A549 (cell line): ENCODE measurements at regions of chr2 and their contacts with region 1.

Region 1: GRCh38 chr2:70861777-70862625 is 26.4 kb upstream of the CD207 start:
- DNase-seq: peak; percentile 85 to 92
- ATAC-seq: peak; percentile 90 to 97
- H3K4me3 ChIP-seq: no peak overlapping the region
- H3K27ac ChIP-seq: no peak overlapping the region
- H3K4me1 ChIP-seq: peaks cover 3% of the 10 kb centered on the region; the same call in 1 of the 3 replicates
- CTCF ChIP-seq: peak; percentile 98
- EP300 ChIP-seq: no peak
- POLR2A ChIP-seq: no peak
- RAD21 ChIP-seq: peak; percentile 91 to 95

Region 2: GRCh38 chr2:70828914-70829824 is 32.8 kb before region 1 on chr2:
- CTCF ChIA-PET with region 1: interaction called, 33 read pairs
- POLR2A ChIA-PET with region 1: no interaction called
- DNase-seq: no peak
- ATAC-seq: no peak
- H3K4me3 ChIP-seq: no peak overlapping the region
- H3K27ac ChIP-seq: no peak overlapping the region
- H3K4me1 ChIP-seq: no peaks in the 10 kb centered on the region
- CTCF ChIP-seq: no peak
- EP300 ChIP-seq: no peak
- POLR2A ChIP-seq: no peak
- RAD21 ChIP-seq: no peak

Region 3: GRCh38 chr2:70851704-70852103 is 10.3 kb before region 1 on chr2:
- CTCF ChIA-PET with region 1: interaction called, 79 read pairs
- POLR2A ChIA-PET with region 1: no interaction called
- DNase-seq: no peak
- ATAC-seq: no peak
- H3K4me3 ChIP-seq: no peak overlapping the region
- H3K27ac ChIP-seq: no peak overlapping the region
- H3K4me1 ChIP-seq: no peaks in the 10 kb centered on the region
- CTCF ChIP-seq: no peak
- EP300 ChIP-seq: no peak
- POLR2A ChIP-seq: no peak
- RAD21 ChIP-seq: no peak

Region 4: GRCh38 chr2:70935468-70936164 is 73.6 kb after region 1 on chr2 and contains the start of gene ATP6V1B1:
- CTCF ChIA-PET with region 1: interaction called, 174 read pairs
- POLR2A ChIA-PET with region 1: no interaction called
- DNase-seq: no peak
- ATAC-seq: peak in 1 of 2 experiments; percentile 17; a peak in 2 of 6 replicates
- H3K4me3 ChIP-seq: no peak within 1 kb of the TSS
- H3K27ac ChIP-seq: no peak within 1 kb of the TSS
- H3K4me1 ChIP-seq: no peaks in the 10 kb centered on the region
- CTCF ChIP-seq: no peak
- EP300 ChIP-seq: no peak
- POLR2A ChIP-seq: no peak
- RAD21 ChIP-seq: no peak
- polyA plus RNA-seq, gene ATP6V1B1: 1.9 and 3.2 TPM in 2 replicates

Region 5: GRCh38 chr2:70964596-70965386 is 102.8 kb after region 1 on chr2:
- CTCF ChIA-PET with region 1: interaction called, 72 read pairs
- POLR2A ChIA-PET with region 1: no interaction called
- DNase-seq: peak; percentile 77 to 80
- ATAC-seq: peak; percentile 69 to 94
- H3K4me3 ChIP-seq: peak overlapping the region; percentile 51
- H3K27ac ChIP-seq: peak overlapping the region in 1 of 2 experiments; percentile 71; a peak in 3 of 6 replicates
- H3K4me1 ChIP-seq: no peaks in the 10 kb centered on the region
- CTCF ChIP-seq: peak; percentile 93
- EP300 ChIP-seq: no peak
- POLR2A ChIP-seq: no peak
- RAD21 ChIP-seq: peak; percentile 62 to 69

Region 6: GRCh38 chr2:71323386-71323785 is 461.4 kb after region 1 on chr2:
- CTCF ChIA-PET with region 1: no interaction called
- POLR2A ChIA-PET with region 1: no interaction called
- DNase-seq: no peak
- ATAC-seq: no peak
- H3K4me3 ChIP-seq: no peak overlapping the region
- H3K27ac ChIP-seq: no peak overlapping the region
- H3K4me1 ChIP-seq: no peaks in the 10 kb centered on the region
- CTCF ChIP-seq: no peak
- EP300 ChIP-seq: no peak
- POLR2A ChIP-seq: no peak
- RAD21 ChIP-seq: no peak